ENCODE measurements at regions of chr3 and their contacts with region 1.

Region 1: DNA sequence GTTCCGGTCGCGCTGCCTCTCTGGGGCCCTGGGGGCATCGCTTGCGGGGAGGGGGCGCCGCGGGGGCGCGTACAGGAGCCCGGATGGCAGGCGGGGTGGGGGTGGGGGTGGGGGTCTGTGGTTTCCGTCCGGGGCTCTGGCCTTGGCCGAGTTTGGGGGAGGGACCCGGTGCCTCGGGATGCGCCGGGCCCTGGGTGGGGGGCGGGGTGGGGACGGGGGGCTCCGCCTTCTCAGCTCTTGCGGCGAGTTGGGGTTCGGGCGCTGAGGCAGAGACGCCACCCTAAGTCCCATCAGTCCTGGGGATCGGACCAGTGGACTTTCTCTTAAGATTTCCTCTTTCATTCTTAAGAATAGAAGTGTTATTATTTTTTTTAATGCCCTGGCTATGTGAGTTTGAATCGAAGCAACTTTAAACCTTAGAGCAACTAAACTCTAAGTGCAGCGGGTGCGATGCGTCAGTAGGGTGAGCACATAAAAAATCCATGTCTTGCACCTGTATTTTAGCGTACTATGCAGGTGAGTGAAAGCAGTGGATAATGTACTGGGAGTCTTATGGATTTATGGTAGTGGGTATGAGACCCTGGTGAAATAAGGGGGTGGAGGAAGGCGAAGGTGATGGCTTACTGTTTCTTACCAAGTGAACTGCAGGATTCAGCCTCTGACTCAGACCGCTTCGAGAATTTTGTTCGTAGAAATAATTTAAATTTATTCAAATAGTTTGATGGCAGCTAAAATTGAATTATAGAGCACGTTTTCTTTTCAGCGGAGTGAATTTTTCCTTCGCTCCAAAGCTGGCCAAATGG is 762 bp downstream of the CTNNB1 start:
- DNase-seq: peak; percentile 46
- ATAC-seq: peak; percentile 14
- H3K4me3 ChIP-seq: peak overlapping the region; percentile 90
- H3K27ac ChIP-seq: peak overlapping the region; percentile 60; the same call in 1 of the 2 replicates
- H3K4me1 ChIP-seq: peaks cover 27% of the 10 kb centered on the region
- H3K27me3 ChIP-seq: no peaks in the 10 kb centered on the region
- CTCF ChIP-seq: no peak

Region 2: DNA sequence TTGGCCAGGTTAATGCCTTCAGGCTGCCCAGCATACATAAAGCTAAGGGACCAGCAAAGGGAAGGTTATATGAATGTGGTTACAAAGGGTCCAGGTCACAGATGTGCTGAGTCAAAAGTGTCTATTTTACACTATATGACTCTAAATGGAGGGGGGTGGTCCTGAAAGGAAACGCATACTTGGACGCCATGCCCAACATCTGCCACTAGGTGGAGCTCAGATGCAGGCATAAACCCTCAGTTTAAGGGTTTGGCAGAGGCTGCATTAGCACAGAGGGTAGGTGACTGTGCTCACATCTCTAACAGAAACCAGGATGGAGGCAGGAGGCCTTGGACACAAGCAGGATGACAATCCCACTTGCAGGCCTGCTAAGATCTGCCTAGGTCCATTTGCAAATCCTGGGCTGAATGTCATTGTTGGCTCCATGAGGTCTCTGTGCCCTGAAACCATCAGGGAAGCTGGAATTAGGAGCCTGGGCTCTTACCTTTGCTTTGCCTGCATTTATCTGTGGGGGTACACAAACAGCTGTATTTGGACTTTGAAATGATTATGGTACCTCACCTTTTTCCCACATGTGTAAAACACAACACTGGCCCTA is 619.5 kb before region 1 on chr3:
- CTCF ChIA-PET with region 1: no interaction called
- POLR2A ChIA-PET with region 1: no interaction called
- intact Hi-C with region 1: loop called (anchors 5 kb)
- DNase-seq: peak; percentile 87
- ATAC-seq: peak; percentile 77
- H3K4me3 ChIP-seq: no peak overlapping the region
- H3K27ac ChIP-seq: no peak overlapping the region
- H3K4me1 ChIP-seq: no peaks in the 10 kb centered on the region
- H3K27me3 ChIP-seq: peaks cover 37% of the 10 kb centered on the region
- CTCF ChIP-seq: peak; percentile 98

Region 3: GRCh38 chr3:40920041-40920440 is 280.0 kb before region 1 on chr3:
- CTCF ChIA-PET with region 1: no interaction called
- POLR2A ChIA-PET with region 1: no interaction called
- intact Hi-C with region 1: loop called (anchors 5 kb)
- DNase-seq: peak; percentile 61
- ATAC-seq: peak; percentile 35; the same call in 1 of the 2 replicates
- H3K4me3 ChIP-seq: no peak overlapping the region
- H3K27ac ChIP-seq: no peak overlapping the region
- H3K4me1 ChIP-seq: peaks cover 8% of the 10 kb centered on the region
- H3K27me3 ChIP-seq: no peaks in the 10 kb centered on the region
- CTCF ChIP-seq: no peak

Region 4: DNA sequence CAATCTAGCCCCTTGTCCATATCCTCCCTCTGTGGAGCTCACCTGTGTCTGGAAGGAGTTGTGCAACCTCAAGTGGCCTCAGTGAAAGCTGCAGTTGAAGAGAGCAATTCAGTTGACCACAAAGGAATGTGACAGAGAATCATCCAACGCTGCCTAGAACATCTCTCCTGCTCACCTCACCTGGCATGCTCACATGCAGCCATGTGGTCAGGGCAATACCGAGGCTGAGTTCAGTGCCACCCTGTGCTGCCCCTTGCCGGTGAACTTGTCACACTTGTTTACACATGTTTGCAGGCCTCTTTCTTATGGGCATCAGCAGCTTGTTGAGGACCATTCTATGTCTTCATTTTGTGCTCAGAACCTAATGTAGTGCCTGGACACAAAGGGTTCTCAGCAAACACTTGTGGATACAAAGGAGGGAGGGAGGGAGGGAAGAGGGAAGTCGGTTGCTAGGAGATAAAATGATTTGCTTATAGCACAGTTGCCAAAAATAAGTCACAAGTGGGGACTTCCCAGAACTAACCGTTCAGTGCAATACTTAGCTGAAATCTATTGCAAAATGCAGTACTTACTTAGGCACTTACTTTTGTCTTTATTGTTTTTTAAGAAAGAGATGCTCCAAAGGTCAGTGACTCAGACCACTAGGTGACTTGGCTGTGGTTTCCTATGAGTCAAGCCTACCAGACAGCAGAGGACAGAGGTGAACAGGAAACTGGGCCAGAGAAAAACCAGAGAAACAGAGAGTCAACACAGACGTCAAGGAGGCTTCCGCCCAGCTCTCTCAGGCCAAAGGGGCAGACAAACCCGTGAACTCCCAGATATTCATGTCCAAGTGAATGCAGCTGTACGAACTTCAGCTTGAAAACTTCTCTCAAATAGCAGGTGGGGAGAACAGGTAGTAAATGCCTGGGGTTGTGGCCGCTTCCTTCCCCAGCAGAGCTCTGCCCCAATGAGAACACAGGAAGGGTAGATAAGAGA is 228.6 kb before region 1 on chr3:
- CTCF ChIA-PET with region 1: no interaction called
- POLR2A ChIA-PET with region 1: no interaction called
- intact Hi-C with region 1: loop called (anchors 1 kb)
- DNase-seq: peak; percentile 96
- ATAC-seq: peak; percentile 98
- H3K4me3 ChIP-seq: no peak overlapping the region
- H3K27ac ChIP-seq: peak overlapping the region; percentile 94
- H3K4me1 ChIP-seq: peaks cover 29% of the 10 kb centered on the region
- H3K27me3 ChIP-seq: no peaks in the 10 kb centered on the region
- CTCF ChIP-seq: peak; percentile 47

Region 5: GRCh38 chr3:41026394-41027177 is 173.5 kb before region 1 on chr3:
- CTCF ChIA-PET with region 1: no interaction called
- POLR2A ChIA-PET with region 1: no interaction called
- intact Hi-C with region 1: no loop called
- DNase-seq: peak; percentile 20
- ATAC-seq: no peak
- H3K4me3 ChIP-seq: no peak overlapping the region
- H3K27ac ChIP-seq: no peak overlapping the region
- H3K4me1 ChIP-seq: no peaks in the 10 kb centered on the region
- H3K27me3 ChIP-seq: peaks cover 60% of the 10 kb centered on the region
- CTCF ChIP-seq: no peak

Region 6: DNA sequence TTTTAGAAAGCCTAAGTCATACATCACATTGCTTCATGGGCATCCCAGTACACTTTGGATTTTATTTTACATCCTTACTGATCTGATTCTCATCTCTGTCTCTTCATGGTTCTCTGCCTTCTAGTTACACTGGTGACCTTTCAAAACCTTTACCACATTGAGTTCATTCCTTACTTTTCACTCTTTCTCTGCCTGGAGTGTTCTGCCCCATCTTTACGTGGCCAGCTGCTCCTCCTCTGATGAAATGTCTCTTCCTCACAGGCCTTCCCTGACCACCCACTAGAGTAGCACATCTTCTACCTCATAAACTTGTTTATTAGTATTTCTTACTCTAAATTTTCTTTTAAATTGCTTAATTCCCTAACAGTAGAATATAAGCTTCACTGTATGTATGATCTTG is 16.9 kb after region 1 on chr3:
- CTCF ChIA-PET with region 1: no interaction called
- POLR2A ChIA-PET with region 1: interaction called, 4 read pairs
- intact Hi-C with region 1: loop called (anchors 1 kb)
- DNase-seq: peak; percentile 10
- ATAC-seq: peak; percentile 58; the same call in 1 of the 2 replicates
- H3K4me3 ChIP-seq: no peak overlapping the region
- H3K27ac ChIP-seq: no peak overlapping the region
- H3K4me1 ChIP-seq: peaks cover 24% of the 10 kb centered on the region
- H3K27me3 ChIP-seq: no peaks in the 10 kb centered on the region
- CTCF ChIP-seq: no peak

Region 7: DNA sequence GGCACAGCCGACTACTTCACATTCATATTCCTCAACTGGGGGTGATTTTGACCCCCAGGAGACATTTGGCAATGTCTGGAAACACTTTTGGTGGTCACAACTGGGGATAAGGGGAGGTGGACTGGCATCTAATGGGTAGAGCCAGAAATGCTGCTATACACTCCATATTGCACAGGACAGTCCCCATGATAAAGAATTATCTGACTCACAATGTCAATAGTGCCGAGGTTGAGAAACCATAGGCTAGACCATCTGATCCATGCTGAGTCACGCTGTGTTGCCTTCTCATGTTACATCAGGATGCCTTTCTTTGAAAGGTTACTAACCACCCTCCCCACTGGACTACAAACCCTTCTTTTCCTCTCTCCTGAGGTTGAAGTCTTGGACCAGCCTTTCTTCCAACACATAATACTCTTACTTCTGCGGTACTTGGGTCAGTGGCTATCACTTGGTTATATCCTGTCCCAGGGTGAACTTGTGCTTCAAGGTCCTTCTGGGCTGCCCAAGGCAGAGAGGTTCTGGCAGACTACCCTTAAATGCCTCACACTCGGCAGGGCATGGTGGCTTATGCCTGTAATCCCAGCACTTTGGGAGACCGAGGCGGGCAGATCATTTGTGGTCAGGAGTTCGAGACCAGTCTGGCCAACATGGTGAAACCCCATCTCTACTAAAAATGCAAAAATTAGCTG is 68.1 kb after region 1 on chr3:
- CTCF ChIA-PET with region 1: no interaction called
- POLR2A ChIA-PET with region 1: interaction called, 3 read pairs
- intact Hi-C with region 1: loop called (anchors 5 kb)
- DNase-seq: peak; percentile 99
- ATAC-seq: peak; percentile 98
- H3K4me3 ChIP-seq: no peak overlapping the region
- H3K27ac ChIP-seq: peak overlapping the region; percentile 68
- H3K4me1 ChIP-seq: peaks cover 36% of the 10 kb centered on the region
- H3K27me3 ChIP-seq: no peaks in the 10 kb centered on the region
- CTCF ChIP-seq: no peak

Region 8: GRCh38 chr3:41286305-41286704 is 86.2 kb after region 1 on chr3:
- CTCF ChIA-PET with region 1: no interaction called
- POLR2A ChIA-PET with region 1: no interaction called
- intact Hi-C with region 1: no loop called
- DNase-seq: no peak
- ATAC-seq: no peak
- H3K4me3 ChIP-seq: no peak overlapping the region
- H3K27ac ChIP-seq: no peak overlapping the region
- H3K4me1 ChIP-seq: no peaks in the 10 kb centered on the region
- H3K27me3 ChIP-seq: no peaks in the 10 kb centered on the region
- CTCF ChIP-seq: no peak

Region 9: DNA sequence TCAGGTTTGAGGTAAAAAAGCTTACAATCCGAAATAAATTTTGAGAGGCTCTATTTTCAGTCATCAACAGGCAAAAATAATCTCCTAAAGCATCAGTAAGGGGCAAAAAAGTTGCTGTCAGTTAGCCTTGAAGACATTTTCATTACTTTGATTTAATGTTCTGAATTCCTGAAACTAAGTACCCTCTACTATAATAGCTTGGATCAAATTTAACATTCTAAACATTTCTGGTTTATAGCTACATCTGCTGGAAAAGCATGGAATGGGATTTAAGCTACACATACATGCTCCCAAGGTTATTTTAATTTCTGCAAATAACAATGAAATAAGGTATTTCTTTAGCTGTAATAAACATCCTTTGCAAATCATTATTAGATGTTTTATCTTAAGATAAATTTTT is 516.4 kb after region 1 on chr3:
- CTCF ChIA-PET with region 1: no interaction called
- POLR2A ChIA-PET with region 1: no interaction called
- intact Hi-C with region 1: loop called (anchors 5 kb)
- DNase-seq: peak; percentile 44
- ATAC-seq: peak; percentile 66
- H3K4me3 ChIP-seq: no peak overlapping the region
- H3K27ac ChIP-seq: no peak overlapping the region
- H3K4me1 ChIP-seq: no peaks in the 10 kb centered on the region
- H3K27me3 ChIP-seq: no peaks in the 10 kb centered on the region
- CTCF ChIP-seq: peak; percentile 63